ENCODE measurements at regions of chr6 and their contacts with region 1.

Region 1: DNA sequence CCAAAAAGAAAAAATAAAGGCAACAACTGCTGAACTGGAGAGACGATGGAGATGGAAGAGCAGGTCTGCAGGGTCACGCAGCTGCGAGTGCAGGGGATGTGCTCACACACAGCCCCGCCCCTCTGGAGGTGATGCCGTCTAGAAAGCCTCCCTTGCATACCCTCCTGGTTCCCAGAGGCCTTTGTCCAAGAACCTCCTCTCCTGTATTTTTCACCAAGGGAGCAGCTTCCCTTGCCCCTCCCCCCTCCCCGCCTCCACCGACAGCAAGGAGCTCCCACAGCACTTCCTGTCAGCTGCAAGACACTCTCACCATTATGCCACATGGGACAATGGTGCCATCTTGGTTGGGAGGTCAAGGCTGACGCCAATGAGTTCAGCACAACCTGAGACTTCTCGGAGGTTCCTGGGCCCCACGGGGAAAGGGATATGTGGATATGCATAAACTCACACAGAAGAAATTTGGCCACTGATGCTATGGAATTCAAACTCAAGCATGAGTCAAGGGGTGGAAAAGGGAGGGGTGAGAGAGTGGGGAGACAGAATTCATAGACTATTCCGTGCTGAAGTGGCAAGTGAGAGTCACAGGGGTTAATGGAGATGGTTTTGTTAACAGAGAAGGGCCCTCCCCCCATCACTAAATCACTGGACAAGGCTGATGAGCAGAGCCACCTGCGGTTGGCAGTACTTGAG is 132.9 kb downstream of the SCML4 start:
- DNase-seq: no peak
- ATAC-seq: peak; percentile 71
- H3K4me3 Mint-ChIP-seq: no peak overlapping the region
- H3K27ac Mint-ChIP-seq: no peak overlapping the region
- H3K4me1 Mint-ChIP-seq: peaks cover 35% of the 10 kb centered on the region
- H3K27me3 Mint-ChIP-seq: no peaks in the 10 kb centered on the region
- CTCF ChIP-seq: no peak

Region 2: DNA sequence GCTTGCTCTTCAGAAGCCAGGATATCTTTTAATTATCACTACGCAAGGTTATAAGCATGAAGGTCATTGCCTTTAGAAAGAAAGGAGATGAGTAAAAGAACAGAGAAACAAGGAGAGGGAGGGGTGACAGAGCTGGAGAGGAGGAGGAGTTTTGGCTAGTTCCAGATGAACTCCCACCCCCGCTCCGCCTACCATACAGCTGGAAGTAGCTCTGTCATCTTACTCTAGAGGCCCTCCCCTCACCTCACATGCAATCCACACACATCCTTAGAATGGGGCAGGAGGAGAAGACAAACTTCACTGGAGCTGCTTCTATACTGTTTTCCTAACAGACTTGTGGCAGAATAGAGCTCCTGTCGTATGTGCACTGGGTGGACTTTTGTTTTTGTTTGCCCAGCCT is 11.8 kb before region 1 on chr6:
- CTCF ChIA-PET with region 1: interaction called, 19 read pairs
- POLR2A ChIA-PET with region 1: interaction called, 3 read pairs
- DNase-seq: peak; percentile 59
- ATAC-seq: peak; percentile 89
- H3K4me3 Mint-ChIP-seq: no peak overlapping the region
- H3K27ac Mint-ChIP-seq: no peak overlapping the region
- H3K4me1 Mint-ChIP-seq: peaks cover 20% of the 10 kb centered on the region
- H3K27me3 Mint-ChIP-seq: peaks cover 13% of the 10 kb centered on the region
- CTCF ChIP-seq: no peak

Measured in WTC11 (cell line).